T-cell (primary cell): ENCODE measurements at regions of chr15 and their contacts with region 1.

Region 1: GRCh38 chr15:89177633-89178306 is 43.6 kb downstream of the RLBP1 start:
- DNase-seq: peak; percentile 13 to 83 (median 54)
- ATAC-seq: peak in 2 of 4 experiments; percentile 47 to 48
- H3K4me3 ChIP-seq: no peak overlapping the region
- H3K4me3 Mint-ChIP-seq: no peak overlapping the region
- H3K27ac ChIP-seq: no peak overlapping the region
- H3K27ac Mint-ChIP-seq: no peak overlapping the region
- H3K4me1 ChIP-seq: peaks cover 0 to 3% of the 10 kb centered on the region in 2 experiments
- H3K4me1 Mint-ChIP-seq: peaks cover 6 to 7% (median 7%) of the 10 kb centered on the region in 3 donors
- H3K27me3 ChIP-seq: no peaks in the 10 kb centered on the region
- H3K27me3 Mint-ChIP-seq: no peaks in the 10 kb centered on the region

Region 2: GRCh38 chr15:88904624-88905327 is 273.0 kb before region 1 on chr15:
- CTCF ChIA-PET with region 1: interaction called, 5 to 14 read pairs
- POLR2A ChIA-PET with region 1: no interaction called
- DNase-seq: peak; percentile 87 to 98 (median 95)
- ATAC-seq: peak; percentile 98 to 100 (median 98)
- H3K4me3 ChIP-seq: peak overlapping the region in 1 of 2 donors; percentile 35
- H3K4me3 Mint-ChIP-seq: peak overlapping the region in 2 of 3 donors; percentile 47 to 73
- H3K27ac ChIP-seq: peak overlapping the region; percentile 82
- H3K27ac Mint-ChIP-seq: peak overlapping the region; percentile 98 to 99
- H3K4me1 ChIP-seq: peaks cover 18 to 41% of the 10 kb centered on the region in 2 experiments
- H3K4me1 Mint-ChIP-seq: peaks cover 38 to 53% (median 52%) of the 10 kb centered on the region in 3 donors
- H3K27me3 ChIP-seq: no peaks in the 10 kb centered on the region
- H3K27me3 Mint-ChIP-seq: no peaks in the 10 kb centered on the region

Region 3: DNA sequence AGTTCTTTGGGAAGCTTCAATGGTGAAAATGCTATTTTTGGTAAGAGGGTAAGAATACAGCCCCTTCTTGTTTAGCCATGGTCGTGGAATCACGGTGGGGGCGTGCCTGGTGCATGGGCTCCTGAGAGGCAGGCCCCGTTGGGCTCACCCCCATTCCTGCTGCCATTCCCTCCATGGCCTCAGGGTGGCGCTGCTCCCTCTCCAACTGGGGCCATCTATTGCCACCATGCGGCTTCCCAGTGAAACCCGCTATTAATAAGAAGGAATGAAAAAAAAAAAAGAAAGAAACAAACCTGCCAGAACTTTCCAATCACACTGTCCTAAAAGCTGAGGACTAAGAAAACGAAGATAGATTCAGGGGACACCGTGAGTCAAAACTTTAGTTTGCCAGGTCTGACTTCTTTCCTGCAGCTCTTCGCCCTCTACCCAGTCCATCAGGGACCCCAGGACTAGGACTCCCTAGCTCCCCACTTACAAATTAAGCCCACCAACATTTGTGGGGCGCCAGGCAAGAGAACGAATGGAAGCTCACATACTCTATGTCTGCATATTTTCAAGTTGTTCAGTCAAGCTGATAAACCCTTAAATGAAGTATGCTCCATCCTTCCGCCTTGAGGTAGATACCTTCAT is 120.2 kb before region 1 on chr15:
- CTCF ChIA-PET with region 1: interaction called, 9 to 15 read pairs
- POLR2A ChIA-PET with region 1: no interaction called
- DNase-seq: peak; percentile 45 to 88 (median 76)
- ATAC-seq: peak; percentile 89 to 96 (median 92)
- H3K4me3 ChIP-seq: no peak overlapping the region
- H3K4me3 Mint-ChIP-seq: no peak overlapping the region
- H3K27ac ChIP-seq: no peak overlapping the region
- H3K27ac Mint-ChIP-seq: no peak overlapping the region
- H3K4me1 ChIP-seq: peaks cover 0 to 7% of the 10 kb centered on the region in 2 experiments
- H3K4me1 Mint-ChIP-seq: peaks cover 7 to 10% (median 7%) of the 10 kb centered on the region in 3 donors
- H3K27me3 ChIP-seq: peaks cover 0 to 4% of the 10 kb centered on the region in 2 experiments
- H3K27me3 Mint-ChIP-seq: no peaks in the 10 kb centered on the region

Region 4: GRCh38 chr15:89206908-89207331 is 29.1 kb after region 1 on chr15:
- CTCF ChIA-PET with region 1: interaction called, 3 to 11 read pairs
- POLR2A ChIA-PET with region 1: no interaction called
- DNase-seq: peak; percentile 9 to 81 (median 56)
- ATAC-seq: peak; percentile 80 to 91 (median 82)
- H3K4me3 ChIP-seq: no peak overlapping the region
- H3K4me3 Mint-ChIP-seq: peak overlapping the region in 1 of 3 donors; percentile 19
- H3K27ac ChIP-seq: no peak overlapping the region
- H3K27ac Mint-ChIP-seq: no peak overlapping the region
- H3K4me1 ChIP-seq: peaks cover 4 to 21% of the 10 kb centered on the region in 2 experiments
- H3K4me1 Mint-ChIP-seq: peaks cover 21 to 30% (median 30%) of the 10 kb centered on the region in 3 donors
- H3K27me3 ChIP-seq: peaks cover 0 to 8% of the 10 kb centered on the region in 2 experiments
- H3K27me3 Mint-ChIP-seq: peaks cover 3% of the 10 kb centered on the region in 2 donors